Right cardiac atrium (tissue), 5 donors: ENCODE measurements at regions of chr6 and their contacts with region 1.

Region 1: DNA sequence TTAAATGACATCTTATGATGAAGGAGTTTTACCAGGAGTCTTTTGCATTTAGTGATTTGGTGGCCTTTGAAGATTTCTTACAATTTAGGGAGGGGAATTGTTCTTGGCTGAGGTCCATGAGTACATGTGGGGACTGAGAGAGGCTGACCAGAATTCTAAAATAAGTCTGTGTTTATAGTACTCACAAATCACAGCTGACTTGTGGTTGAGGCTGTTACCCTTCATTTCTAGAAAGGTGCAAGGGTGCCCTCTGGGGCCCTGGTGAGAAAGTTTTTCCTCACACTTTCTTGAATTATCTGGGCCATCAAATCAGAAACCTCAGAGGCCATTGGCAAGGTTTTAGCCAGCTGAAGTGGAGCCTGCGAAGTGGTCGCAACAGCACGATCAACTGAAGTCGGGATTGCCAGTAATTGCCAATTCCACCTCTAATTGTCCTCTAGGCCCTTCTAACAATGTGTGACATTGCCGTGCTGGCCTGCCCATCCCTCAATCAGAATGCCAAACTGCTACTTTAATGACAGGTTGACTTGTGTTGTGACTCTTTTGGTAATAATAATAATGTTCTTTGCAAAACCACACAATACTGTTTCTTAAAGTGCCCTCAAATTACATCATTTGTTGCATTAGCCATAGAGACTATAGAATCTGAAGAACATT is 221.6 kb downstream of the OGFRL1 start:
- DNase-seq: peak; percentile 43 to 56 (median 50)
- ATAC-seq: peak; percentile 79 to 85
- H3K4me3 ChIP-seq: no peak overlapping the region
- H3K27ac ChIP-seq: no peak overlapping the region
- H3K4me1 ChIP-seq: no peaks in the 10 kb centered on the region
- H3K27me3 ChIP-seq: no peaks in the 10 kb centered on the region

Region 2: DNA sequence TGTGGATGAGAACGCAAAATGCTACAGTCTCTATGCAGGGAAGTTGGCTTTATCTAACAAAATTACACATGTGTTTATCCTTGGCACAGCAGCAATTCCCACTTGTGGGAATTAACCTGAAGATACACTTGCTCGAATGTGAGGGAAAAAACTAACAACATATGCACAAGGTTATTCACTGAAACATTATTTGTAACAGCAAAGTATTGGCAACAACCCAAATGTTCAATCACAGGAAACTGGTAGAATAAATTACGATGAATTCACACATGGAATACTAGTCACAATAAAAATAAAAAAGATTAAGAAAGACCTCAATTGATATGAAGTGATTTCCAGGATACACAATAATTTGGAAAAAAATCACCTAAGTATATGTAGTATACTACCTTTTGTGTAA is 289.7 kb before region 1 on chr6:
- intact Hi-C with region 1: no loop called
- DNase-seq: no peak
- ATAC-seq: no peak
- H3K4me3 ChIP-seq: no peak overlapping the region
- H3K27ac ChIP-seq: no peak overlapping the region
- H3K4me1 ChIP-seq: no peaks in the 10 kb centered on the region
- H3K27me3 ChIP-seq: no peaks in the 10 kb centered on the region

Region 3: GRCh38 chr6:71351190-71351589 is 159.0 kb before region 1 on chr6:
- intact Hi-C with region 1: no loop called
- DNase-seq: no peak
- ATAC-seq: no peak
- H3K4me3 ChIP-seq: no peak overlapping the region
- H3K27ac ChIP-seq: peak overlapping the region; percentile 72
- H3K4me1 ChIP-seq: no peaks in the 10 kb centered on the region
- H3K27me3 ChIP-seq: no peaks in the 10 kb centered on the region

Region 4: GRCh38 chr6:71383901-71384489 is 126.2 kb before region 1 on chr6:
- intact Hi-C with region 1: loop called (anchors 2 to 10 kb)
- DNase-seq: no peak
- ATAC-seq: no peak
- H3K4me3 ChIP-seq: no peak overlapping the region
- H3K27ac ChIP-seq: no peak overlapping the region
- H3K4me1 ChIP-seq: no peaks in the 10 kb centered on the region
- H3K27me3 ChIP-seq: no peaks in the 10 kb centered on the region